Motor neuron (in vitro differentiated cells): ENCODE measurements at regions of chr15 and their contacts with region 1.

Region 1: GRCh38 chr15:34101366-34102175 is at the starts of genes EMC7 and PGBD4:
- ATAC-seq: peak; percentile 96 to 100 (median 99)
- H3K4me3 ChIP-seq: peak within 1 kb of the TSS; percentile 64 to 99 (median 91)
- H3K27ac ChIP-seq: peak within 1 kb of the TSS; percentile 91 to 92
- H3K4me1 ChIP-seq: peaks cover 6 to 10% of the 10 kb centered on the region in 2 donors
- total RNA-seq, gene EMC7: 40.6 to 122 (median 57.7) TPM
- total RNA-seq, gene PGBD4: 1.7 to 5.1 (median 3.2) TPM

Region 2: DNA sequence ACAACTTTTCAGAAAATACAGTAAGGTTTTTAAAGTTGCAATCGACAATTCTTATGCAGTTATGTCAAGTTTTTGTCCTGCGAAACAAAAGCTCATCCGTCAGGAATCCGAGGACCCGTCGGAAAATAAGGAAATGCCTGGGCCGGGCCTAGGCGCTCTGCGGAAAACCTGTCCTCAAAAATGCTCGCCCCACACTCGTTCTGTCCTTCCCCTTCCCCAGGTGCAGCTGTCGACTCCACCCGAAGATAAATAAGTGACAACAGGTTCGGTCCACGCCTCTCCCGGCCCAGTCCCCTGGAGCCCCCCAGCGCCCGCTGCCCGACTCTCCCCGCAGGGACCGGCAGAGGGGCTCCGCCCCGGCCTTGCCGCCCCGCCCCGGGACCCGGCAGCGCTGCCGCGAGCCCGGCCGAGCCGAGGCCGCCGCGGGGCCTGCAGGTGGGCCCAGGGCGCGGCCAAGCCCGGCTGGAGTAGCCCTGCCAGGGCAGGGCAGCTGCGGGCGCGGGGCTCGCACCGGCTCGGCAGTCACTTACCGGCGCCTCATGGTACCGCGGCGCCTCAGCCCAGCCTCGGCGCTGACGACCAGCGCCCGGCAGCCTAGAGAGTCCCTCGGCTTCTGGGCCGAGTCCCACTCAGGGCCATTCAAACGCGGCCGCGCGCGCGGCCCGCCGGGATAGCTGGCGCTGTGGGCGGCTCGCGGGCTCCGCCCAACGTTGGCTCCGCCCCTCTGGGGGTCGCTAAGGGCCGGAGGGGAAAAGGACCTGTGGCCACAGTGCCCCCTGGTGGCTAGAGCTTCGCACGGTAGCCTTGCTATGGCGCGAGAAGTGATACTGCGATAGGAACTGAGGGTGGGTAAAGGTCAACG is 108.1 kb after region 1 on chr15 and contains the start of gene KATNBL1:
- in situ Hi-C with region 1: loop called in 5 of 9 experiments (anchors 10 to 25 kb)
- ATAC-seq: peak; percentile 90 to 97 (median 96)
- H3K4me3 ChIP-seq: peak within 1 kb of the TSS; percentile 77 to 90 (median 82)
- H3K27ac ChIP-seq: peak within 1 kb of the TSS; percentile 85 to 89
- H3K4me1 ChIP-seq: peaks cover 4 to 10% of the 10 kb centered on the region in 2 donors
- total RNA-seq, gene KATNBL1: 19.3 to 52.0 (median 41.7) TPM

Region 3: GRCh38 chr15:34223904-34224596 is 122.5 kb after region 1 on chr15:
- in situ Hi-C with region 1: loop called in 6 of 9 experiments (anchors 10 to 25 kb)
- ATAC-seq: peak in 2 of 8 experiments; percentile 3 to 5
- H3K4me3 ChIP-seq: peak overlapping the region; percentile 59 to 94 (median 89)
- H3K27ac ChIP-seq: peak overlapping the region; percentile 74 to 93
- H3K4me1 ChIP-seq: peaks cover 7 to 11% of the 10 kb centered on the region in 2 donors

Region 4: GRCh38 chr15:34367101-34368081 is 265.8 kb after region 1 on chr15 and contains the start of gene LPCAT4:
- in situ Hi-C with region 1: loop called in 1 of 9 experiments (anchors 25 kb)
- ATAC-seq: peak; percentile 77 to 91 (median 81)
- H3K4me3 ChIP-seq: peak within 1 kb of the TSS; percentile 71 to 94 (median 93)
- H3K27ac ChIP-seq: peak within 1 kb of the TSS; percentile 93 to 98
- H3K4me1 ChIP-seq: peaks cover 12 to 13% of the 10 kb centered on the region in 2 donors
- total RNA-seq, gene LPCAT4: 9.9 to 39.6 (median 21.8) TPM